SK-N-SH (cell line): ENCODE measurements at regions of chr10 and their contacts with region 1.

Region 1: GRCh38 chr10:67520924-67521520 is 175.0 kb downstream of the CTNNA3 start:
- DNase-seq: peak; percentile 42
- H3K4me3 ChIP-seq: peak overlapping the region in 1 of 2 experiments; percentile 33; a peak in 1 of 4 replicates
- H3K27ac ChIP-seq: no peak overlapping the region
- H3K4me1 ChIP-seq: no peaks in the 10 kb centered on the region
- H3K27me3 ChIP-seq: no peaks in the 10 kb centered on the region; the same call in 1 of the 2 replicates
- CTCF ChIP-seq: peak; percentile 85
- EP300 ChIP-seq: no peak
- RAD21 ChIP-seq: peak; percentile 88

Region 2: GRCh38 chr10:67506082-67506756 is 14.8 kb before region 1 on chr10:
- CTCF ChIA-PET with region 1: interaction called, 11 read pairs
- POLR2A ChIA-PET with region 1: no interaction called
- DNase-seq: no peak
- H3K4me3 ChIP-seq: no peak overlapping the region
- H3K27ac ChIP-seq: no peak overlapping the region
- H3K4me1 ChIP-seq: no peaks in the 10 kb centered on the region
- H3K27me3 ChIP-seq: no peaks in the 10 kb centered on the region
- CTCF ChIP-seq: no peak
- EP300 ChIP-seq: no peak
- RAD21 ChIP-seq: no peak